Mammary epithelial cell (primary cell): ENCODE measurements at regions of chrX and their contacts with region 1.

Region 1: GRCh38 chrX:16638533-16638932 is 11.4 kb upstream of the S100G start:
- DNase-seq: no peak
- H3K4me3 ChIP-seq: no peak overlapping the region
- H3K27ac ChIP-seq: no peak overlapping the region
- H3K4me1 ChIP-seq: peaks cover 15% of the 10 kb centered on the region
- H3K27me3 ChIP-seq: no peaks in the 10 kb centered on the region
- CTCF ChIP-seq: no peak

Region 2: GRCh38 chrX:16695079-16695676 is 56.6 kb after region 1 on chrX:
- CTCF ChIA-PET with region 1: no interaction called
- dilution Hi-C with region 1: no loop called
- in situ Hi-C with region 1: no loop called
- intact Hi-C with region 1: no loop called
- DNase-seq: peak; percentile 32
- H3K4me3 ChIP-seq: no peak overlapping the region
- H3K27ac ChIP-seq: no peak overlapping the region
- H3K4me1 ChIP-seq: no peaks in the 10 kb centered on the region
- H3K27me3 ChIP-seq: no peaks in the 10 kb centered on the region
- CTCF ChIP-seq: peak; percentile 93 to 97

Region 3: DNA sequence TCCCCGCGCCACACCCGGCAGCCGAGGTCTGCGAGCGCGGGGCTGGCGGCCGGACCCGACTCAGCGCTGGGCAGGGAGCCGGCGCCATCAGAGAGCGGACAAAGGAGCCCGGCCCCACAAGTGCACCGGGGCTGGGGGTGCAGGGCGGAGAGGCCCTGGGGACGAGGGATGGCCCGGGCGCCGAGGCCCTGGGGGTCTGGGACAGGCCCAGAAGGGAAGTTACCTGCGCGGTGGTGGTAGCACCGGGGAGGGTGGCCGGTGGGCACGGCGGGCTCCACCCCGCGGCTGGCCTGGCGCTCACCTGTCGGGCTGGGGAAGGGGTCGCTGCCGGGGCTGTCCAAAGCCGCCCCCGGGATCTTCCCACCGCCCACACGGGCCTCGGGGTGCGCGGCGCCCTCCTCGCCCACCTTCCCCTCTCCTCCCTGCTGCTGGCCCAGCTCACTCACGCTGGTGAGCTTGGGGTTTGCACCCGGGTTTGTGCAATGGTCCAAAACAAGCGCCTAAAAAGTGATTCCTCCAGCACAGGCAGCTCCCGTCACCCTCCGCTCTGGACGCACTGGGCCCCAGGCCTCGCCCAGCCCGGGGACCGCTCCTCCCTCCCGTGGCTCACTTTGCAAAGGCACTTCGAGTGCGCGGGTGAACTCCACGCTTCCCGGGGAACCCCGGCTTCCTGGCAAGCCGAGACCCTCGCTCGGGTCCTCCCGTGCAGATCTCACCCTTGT is 73.7 kb after region 1 on chrX and contains the start of gene CTPS2:
- CTCF ChIA-PET with region 1: no interaction called
- dilution Hi-C with region 1: loop called (anchors 5 kb)
- in situ Hi-C with region 1: no loop called
- intact Hi-C with region 1: no loop called
- DNase-seq: peak; percentile 62
- H3K4me3 ChIP-seq: peak within 1 kb of the TSS; percentile 70 to 88 (median 80)
- H3K27ac ChIP-seq: peak within 1 kb of the TSS; percentile 37
- H3K4me1 ChIP-seq: peaks cover 5% of the 10 kb centered on the region
- H3K27me3 ChIP-seq: no peaks in the 10 kb centered on the region
- CTCF ChIP-seq: no peak
- total RNA-seq, gene CTPS2: 8.4 to 8.5 TPM